Caco-2 (cell line): ENCODE measurements at regions of chr3 and their contacts with region 1.

Region 1: GRCh38 chr3:48088749-48089466 is 72.7 kb upstream of the MAP4 start:
- DNase-seq: peak; percentile 96 to 98
- H3K4me3 ChIP-seq: peak overlapping the region; percentile 68
- H3K4me3 Mint-ChIP-seq: peak overlapping the region; percentile 96
- H3K27ac Mint-ChIP-seq: peak overlapping the region; percentile 99
- H3K4me1 ChIP-seq: peaks cover 20% of the 10 kb centered on the region
- H3K4me1 Mint-ChIP-seq: peaks cover 5% of the 10 kb centered on the region
- H3K27me3 ChIP-seq: no peaks in the 10 kb centered on the region
- H3K27me3 Mint-ChIP-seq: no peaks in the 10 kb centered on the region
- CTCF ChIP-seq: no peak

Region 2: GRCh38 chr3:47954567-47954966 is 134.3 kb before region 1 on chr3:
- CTCF ChIA-PET with region 1: interaction called, 12 read pairs
- POLR2A ChIA-PET with region 1: no interaction called
- intact Hi-C with region 1: no loop called
- DNase-seq: no peak
- H3K4me3 ChIP-seq: no peak overlapping the region
- H3K4me3 Mint-ChIP-seq: no peak overlapping the region
- H3K27ac Mint-ChIP-seq: no peak overlapping the region
- H3K4me1 ChIP-seq: no peaks in the 10 kb centered on the region
- H3K4me1 Mint-ChIP-seq: no peaks in the 10 kb centered on the region
- H3K27me3 ChIP-seq: no peaks in the 10 kb centered on the region
- H3K27me3 Mint-ChIP-seq: no peaks in the 10 kb centered on the region
- CTCF ChIP-seq: no peak

Region 3: GRCh38 chr3:48039487-48040190 is 49.3 kb before region 1 on chr3:
- CTCF ChIA-PET with region 1: no interaction called
- POLR2A ChIA-PET with region 1: interaction called, 20 read pairs
- intact Hi-C with region 1: loop called (anchors 5 kb)
- DNase-seq: peak in 1 of 2 experiments; percentile 50
- H3K4me3 ChIP-seq: no peak overlapping the region
- H3K4me3 Mint-ChIP-seq: peak overlapping the region; percentile 11
- H3K27ac Mint-ChIP-seq: peak overlapping the region; percentile 76
- H3K4me1 ChIP-seq: peaks cover 22% of the 10 kb centered on the region
- H3K4me1 Mint-ChIP-seq: peaks cover 10% of the 10 kb centered on the region
- H3K27me3 ChIP-seq: no peaks in the 10 kb centered on the region
- H3K27me3 Mint-ChIP-seq: no peaks in the 10 kb centered on the region
- CTCF ChIP-seq: no peak

Region 4: DNA sequence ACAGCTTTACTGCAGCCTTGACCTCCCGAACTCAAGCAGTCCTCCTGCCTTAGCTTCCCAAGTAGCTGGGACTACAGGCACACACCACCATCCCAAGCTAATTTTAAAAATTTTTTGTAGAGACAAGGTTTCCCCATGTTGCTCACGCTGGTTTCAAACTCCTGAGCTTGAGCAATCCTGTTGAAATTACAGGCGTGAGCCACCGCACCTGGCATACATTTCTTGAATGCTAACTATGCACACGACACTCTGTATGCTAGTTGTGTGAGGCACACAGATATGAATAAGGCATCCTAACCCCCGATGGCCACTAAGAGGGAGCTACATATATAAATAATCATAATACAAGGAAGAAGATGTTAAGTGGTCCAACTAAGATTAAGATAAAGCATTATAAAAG is 34.4 kb after region 1 on chr3:
- CTCF ChIA-PET with region 1: interaction called, 3 read pairs
- POLR2A ChIA-PET with region 1: interaction called, 13 read pairs
- intact Hi-C with region 1: no loop called
- DNase-seq: no peak
- H3K4me3 ChIP-seq: no peak overlapping the region
- H3K4me3 Mint-ChIP-seq: no peak overlapping the region
- H3K27ac Mint-ChIP-seq: peak overlapping the region; percentile 15
- H3K4me1 ChIP-seq: peaks cover 14% of the 10 kb centered on the region; the same call in 1 of the 2 replicates
- H3K4me1 Mint-ChIP-seq: peaks cover 8% of the 10 kb centered on the region
- H3K27me3 ChIP-seq: no peaks in the 10 kb centered on the region
- H3K27me3 Mint-ChIP-seq: no peaks in the 10 kb centered on the region
- CTCF ChIP-seq: no peak